Common myeloid progenitor, CD34-positive (primary cell): ENCODE measurements at regions of chr13 and their contacts with region 1.

Region 1: DNA sequence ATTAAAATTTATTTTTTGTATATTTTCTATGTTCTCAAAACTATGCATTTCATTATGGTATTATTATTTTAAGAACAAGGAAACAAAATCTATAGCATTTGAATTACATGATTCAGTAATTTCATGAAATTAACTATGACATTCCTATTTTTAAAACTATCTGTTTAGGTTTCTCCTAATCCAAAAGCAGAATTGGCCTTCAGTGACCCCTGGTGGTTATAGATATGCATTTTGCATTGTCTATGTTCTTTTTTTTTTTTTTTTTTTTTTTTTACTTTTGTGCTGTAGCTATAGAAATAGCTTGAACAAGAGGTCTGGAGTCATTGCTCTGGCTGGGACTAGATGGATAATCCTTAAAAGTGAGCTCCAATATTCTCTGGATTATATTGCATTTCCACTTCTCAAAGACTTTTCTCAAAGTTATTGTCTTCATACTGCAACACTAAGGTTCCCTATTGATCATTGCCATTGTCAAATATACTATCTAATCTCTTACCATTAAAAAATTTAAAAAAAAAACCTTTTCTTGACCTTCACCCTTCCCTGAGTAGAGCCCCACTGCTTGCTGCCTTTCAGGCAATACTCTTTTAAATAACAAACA is 15.9 kb upstream of the DNAJC3 start:
- DNase-seq: peak; percentile 49 to 77 (median 67)
- H3K4me3 ChIP-seq: no peak overlapping the region
- H3K27ac ChIP-seq: no peak overlapping the region
- H3K4me1 ChIP-seq: no peaks in the 10 kb centered on the region
- H3K27me3 ChIP-seq: no peaks in the 10 kb centered on the region

Region 2: GRCh38 chr13:95624020-95624419 is 37.1 kb before region 1 on chr13:
- CTCF ChIA-PET with region 1: interaction called, 12 read pairs
- POLR2A ChIA-PET with region 1: no interaction called
- DNase-seq: peak; percentile 49 to 73 (median 68)
- H3K4me3 ChIP-seq: no peak overlapping the region
- H3K27ac ChIP-seq: no peak overlapping the region
- H3K4me1 ChIP-seq: peaks cover 0 to 19% (median 9%) of the 10 kb centered on the region in 4 experiments
- H3K27me3 ChIP-seq: no peaks in the 10 kb centered on the region

Region 3: GRCh38 chr13:95671597-95671996 is 10.5 kb after region 1 on chr13:
- CTCF ChIA-PET with region 1: interaction called, 12 read pairs
- POLR2A ChIA-PET with region 1: no interaction called
- DNase-seq: no peak
- H3K4me3 ChIP-seq: no peak overlapping the region
- H3K27ac ChIP-seq: no peak overlapping the region
- H3K4me1 ChIP-seq: peaks cover 7 to 18% (median 12%) of the 10 kb centered on the region in 4 experiments
- H3K27me3 ChIP-seq: no peaks in the 10 kb centered on the region

Region 4: DNA sequence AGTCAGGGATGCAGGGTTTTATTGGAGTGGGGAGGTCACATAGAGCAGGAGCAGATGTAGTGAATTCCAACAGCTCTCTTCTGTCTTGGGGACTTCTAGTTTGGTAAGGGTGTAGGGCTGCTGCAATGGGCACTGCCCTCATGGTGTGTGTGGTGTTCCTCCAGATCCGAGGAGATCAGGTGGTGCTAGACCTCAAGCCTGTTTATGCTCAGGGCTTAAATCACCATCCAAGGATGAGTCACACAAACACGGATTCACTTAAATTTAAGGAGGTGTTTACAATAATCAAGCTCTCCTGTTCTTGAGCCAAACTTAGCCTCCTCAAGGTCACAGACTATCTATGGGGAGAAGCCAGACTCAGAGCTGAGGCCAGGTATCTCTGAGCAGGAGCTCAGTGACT is 451.8 kb after region 1 on chr13:
- CTCF ChIA-PET with region 1: no interaction called
- POLR2A ChIA-PET with region 1: no interaction called
- DNase-seq: no peak
- H3K4me3 ChIP-seq: no peak overlapping the region
- H3K27ac ChIP-seq: no peak overlapping the region
- H3K4me1 ChIP-seq: no peaks in the 10 kb centered on the region
- H3K27me3 ChIP-seq: no peaks in the 10 kb centered on the region